Activated CD4-positive, alpha-beta T cell treated with anti-CD3 and anti-CD28 coated beads for 36 hours (primary cell): ENCODE measurements at regions of chr1 and their contacts with region 1.

Region 1: DNA sequence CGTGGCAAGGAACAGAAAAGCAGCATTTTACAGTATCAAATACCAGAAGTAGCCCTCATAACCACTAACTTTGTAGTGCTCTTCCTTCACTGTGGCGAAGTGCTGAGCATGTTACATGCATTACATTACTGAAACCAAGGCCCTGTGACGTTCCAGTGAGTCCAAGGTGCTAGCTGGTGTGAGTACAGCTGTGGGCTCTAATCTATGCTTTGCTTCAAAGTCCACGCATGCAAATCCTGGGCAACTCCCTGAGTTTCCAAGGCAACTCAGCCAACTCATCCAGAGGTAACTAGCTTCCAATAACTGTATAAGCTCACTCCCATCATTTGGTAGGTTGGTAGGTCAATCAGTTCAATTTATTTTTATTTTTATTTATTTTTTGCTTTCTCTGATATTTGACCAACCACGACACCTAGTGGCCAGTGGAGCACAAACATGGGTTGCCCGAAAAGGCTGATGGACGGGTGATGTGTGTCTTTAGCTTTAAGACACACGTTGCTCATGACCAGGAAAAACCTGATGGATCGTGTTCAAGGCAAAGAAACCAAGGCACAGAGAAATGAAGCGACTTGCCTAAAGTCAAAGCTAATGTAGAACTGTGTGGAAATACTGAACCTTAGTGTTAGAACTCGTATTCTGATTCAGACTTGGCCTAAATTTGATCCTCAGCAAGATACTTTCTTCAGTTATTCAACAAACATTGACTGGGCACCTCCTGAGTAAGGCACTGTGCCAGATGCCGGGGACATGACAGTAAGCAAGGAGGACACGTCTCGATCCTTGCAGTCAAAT is 73.0 kb downstream of the GNG12 start:
- DNase-seq: peak; percentile 76
- ATAC-seq: peak; percentile 58
- H3K4me3 Mint-ChIP-seq: no peak overlapping the region
- H3K27ac Mint-ChIP-seq: no peak overlapping the region
- H3K4me1 Mint-ChIP-seq: no peaks in the 10 kb centered on the region
- H3K27me3 Mint-ChIP-seq: peaks cover 13% of the 10 kb centered on the region

Region 2: GRCh38 chr1:67535474-67535873 is 224.8 kb before region 1 on chr1:
- CTCF ChIA-PET with region 1: interaction called, 113 read pairs
- POLR2A ChIA-PET with region 1: no interaction called
- intact Hi-C with region 1: loop called (anchors 1 kb)
- DNase-seq: peak; percentile 83
- ATAC-seq: peak; percentile 79
- H3K4me3 Mint-ChIP-seq: no peak overlapping the region
- H3K27ac Mint-ChIP-seq: no peak overlapping the region
- H3K4me1 Mint-ChIP-seq: no peaks in the 10 kb centered on the region
- H3K27me3 Mint-ChIP-seq: peaks cover 5% of the 10 kb centered on the region

Region 3: DNA sequence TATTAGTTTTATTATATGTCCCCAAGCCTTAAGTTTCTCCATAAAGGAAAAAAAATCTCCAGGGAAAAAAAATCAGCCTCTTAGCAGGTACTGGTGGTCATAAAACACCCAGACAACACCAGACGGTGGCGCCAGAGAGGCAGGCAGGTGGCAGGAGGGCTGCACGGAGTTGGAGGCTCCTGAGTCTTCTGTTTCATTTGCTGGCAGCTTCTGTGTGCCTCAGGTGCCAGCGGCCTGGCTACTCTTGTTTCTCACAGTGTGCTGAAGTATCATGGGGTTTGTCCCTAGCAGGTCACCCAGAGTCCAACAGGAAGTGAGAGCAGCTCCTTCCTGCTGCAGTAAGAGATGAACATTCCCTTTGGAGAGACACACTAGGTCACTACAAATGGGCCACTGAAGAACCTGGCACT is 198.5 kb before region 1 on chr1:
- CTCF ChIA-PET with region 1: interaction called, 161 read pairs
- POLR2A ChIA-PET with region 1: interaction called, 3 read pairs
- intact Hi-C with region 1: loop called (anchors 1 kb)
- DNase-seq: peak; percentile 95
- ATAC-seq: peak; percentile 91
- H3K4me3 Mint-ChIP-seq: no peak overlapping the region
- H3K27ac Mint-ChIP-seq: no peak overlapping the region
- H3K4me1 Mint-ChIP-seq: peaks cover 5% of the 10 kb centered on the region
- H3K27me3 Mint-ChIP-seq: peaks cover 4% of the 10 kb centered on the region

Region 4: DNA sequence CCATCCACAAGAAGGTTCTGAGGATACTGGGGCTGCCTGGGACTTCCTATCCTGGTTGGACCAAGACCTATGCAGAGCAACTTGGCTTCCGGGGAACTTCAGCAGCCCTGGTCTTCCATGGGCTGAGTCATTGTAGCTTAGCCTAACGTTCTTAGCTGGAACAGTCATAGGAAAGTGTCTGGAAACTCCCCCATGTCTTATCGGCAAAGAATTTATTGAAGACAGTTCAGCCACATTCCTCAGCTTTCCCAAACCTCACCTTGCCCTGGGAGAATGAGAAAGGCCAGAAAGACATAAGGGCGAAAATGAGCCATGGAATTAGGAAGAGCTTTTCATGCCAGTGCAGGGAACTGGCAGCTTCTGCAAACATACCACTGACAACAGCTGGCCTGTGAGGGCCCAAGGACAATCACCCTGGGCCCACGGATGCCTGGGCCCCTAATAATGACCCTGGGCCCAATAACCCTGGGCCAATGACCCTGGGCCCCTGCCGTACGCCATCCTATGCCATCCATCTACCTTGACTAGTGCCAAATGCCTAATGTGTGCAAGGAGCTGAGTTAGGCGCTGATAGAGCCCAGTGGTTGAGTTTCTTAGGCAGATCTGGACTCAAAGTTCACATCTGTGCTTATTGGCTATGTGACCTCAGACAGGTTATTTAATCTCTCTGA is 189.6 kb before region 1 on chr1:
- CTCF ChIA-PET with region 1: interaction called, 16 read pairs
- POLR2A ChIA-PET with region 1: no interaction called
- intact Hi-C with region 1: no loop called
- DNase-seq: no peak
- ATAC-seq: no peak
- H3K4me3 Mint-ChIP-seq: no peak overlapping the region
- H3K27ac Mint-ChIP-seq: no peak overlapping the region
- H3K4me1 Mint-ChIP-seq: no peaks in the 10 kb centered on the region
- H3K27me3 Mint-ChIP-seq: no peaks in the 10 kb centered on the region

Region 5: GRCh38 chr1:67749844-67750689 is 10.2 kb before region 1 on chr1:
- CTCF ChIA-PET with region 1: interaction called, 18 read pairs
- POLR2A ChIA-PET with region 1: no interaction called
- intact Hi-C with region 1: no loop called
- DNase-seq: no peak
- ATAC-seq: peak; percentile 58
- H3K4me3 Mint-ChIP-seq: no peak overlapping the region
- H3K27ac Mint-ChIP-seq: no peak overlapping the region
- H3K4me1 Mint-ChIP-seq: peaks cover 27% of the 10 kb centered on the region
- H3K27me3 Mint-ChIP-seq: peaks cover 9% of the 10 kb centered on the region

Region 6: DNA sequence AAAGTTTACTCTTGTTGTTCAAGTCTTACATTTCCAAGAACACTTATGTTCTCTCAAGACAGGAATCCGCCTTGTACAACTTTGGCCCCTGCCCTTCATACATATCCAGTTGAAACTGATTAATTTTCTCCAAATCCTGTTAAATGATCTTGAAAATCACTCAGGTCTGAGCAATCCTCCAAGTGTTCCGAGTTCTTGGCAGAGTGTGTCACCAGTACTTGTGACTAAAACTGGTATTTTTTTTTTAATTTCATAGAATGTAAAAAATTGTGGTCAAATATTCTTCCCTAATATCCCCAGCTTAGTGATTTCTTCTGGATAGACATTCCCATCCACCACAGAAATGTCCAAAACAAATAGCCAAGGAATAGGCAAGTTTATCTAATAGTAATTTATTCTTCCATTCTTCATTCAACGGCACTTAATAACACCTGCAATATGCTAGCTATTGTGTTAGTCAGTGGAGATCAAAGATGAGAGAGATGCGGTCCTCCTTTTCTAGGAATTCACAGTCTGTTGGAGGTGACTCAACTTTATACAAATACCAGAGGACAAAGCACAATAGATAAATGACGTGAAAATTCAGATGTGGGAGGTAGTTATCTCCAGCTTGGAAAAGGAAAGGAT is 218.8 kb after region 1 on chr1:
- CTCF ChIA-PET with region 1: no interaction called
- POLR2A ChIA-PET with region 1: no interaction called
- intact Hi-C with region 1: no loop called
- DNase-seq: no peak
- ATAC-seq: no peak
- H3K4me3 Mint-ChIP-seq: no peak overlapping the region
- H3K27ac Mint-ChIP-seq: no peak overlapping the region
- H3K4me1 Mint-ChIP-seq: no peaks in the 10 kb centered on the region
- H3K27me3 Mint-ChIP-seq: no peaks in the 10 kb centered on the region